ENCODE measurements at regions of chr14 and their contacts with region 1.

Region 1: DNA sequence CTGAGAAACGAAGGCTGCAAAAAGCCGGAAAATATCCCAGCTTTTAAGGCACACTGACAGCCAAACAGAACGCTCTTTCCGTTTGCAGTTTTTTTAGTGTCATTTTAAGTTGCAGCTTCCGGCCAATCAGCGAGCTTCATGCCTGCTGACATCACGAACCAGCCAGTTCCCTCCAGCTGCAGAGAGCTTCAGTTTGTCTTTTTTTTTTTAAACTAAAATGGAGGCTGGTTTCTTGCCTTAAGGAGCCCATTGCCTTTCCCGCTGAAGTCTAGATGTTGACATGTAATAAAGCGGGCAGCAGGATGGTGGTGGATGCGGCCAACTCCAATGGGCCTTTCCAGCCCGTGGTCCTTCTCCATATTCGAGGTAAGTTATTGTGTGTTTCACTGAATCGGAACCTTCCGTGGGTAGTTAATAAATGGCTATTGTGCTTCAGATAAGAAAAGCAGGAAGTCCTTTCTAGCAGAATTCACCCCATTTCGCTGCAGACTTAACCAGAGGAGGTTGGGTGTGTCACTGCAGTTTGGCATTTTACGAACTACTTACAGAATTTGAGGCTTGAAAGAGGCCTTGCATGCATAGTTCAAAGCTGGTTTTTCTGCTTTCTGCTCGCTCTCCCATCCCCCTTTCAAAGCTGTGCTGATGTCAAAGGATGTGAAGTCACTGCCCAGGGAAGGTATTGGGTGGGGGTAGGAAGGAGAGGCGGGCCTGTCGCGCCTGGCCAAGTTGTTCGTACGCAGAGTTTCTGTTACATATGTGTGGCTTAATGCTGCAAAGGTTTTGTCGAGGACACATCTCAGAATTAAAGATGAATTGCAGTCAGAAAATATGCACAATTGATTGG is 48.4 kb downstream of the PPP2R5C start:
- DNase-seq: peak; percentile 94
- ATAC-seq: peak; percentile 88
- H3K4me3 Mint-ChIP-seq: peak overlapping the region; percentile 87
- H3K27ac Mint-ChIP-seq: peak overlapping the region; percentile 95
- H3K4me1 Mint-ChIP-seq: peaks cover 40% of the 10 kb centered on the region
- H3K27me3 Mint-ChIP-seq: no peaks in the 10 kb centered on the region

Region 2: DNA sequence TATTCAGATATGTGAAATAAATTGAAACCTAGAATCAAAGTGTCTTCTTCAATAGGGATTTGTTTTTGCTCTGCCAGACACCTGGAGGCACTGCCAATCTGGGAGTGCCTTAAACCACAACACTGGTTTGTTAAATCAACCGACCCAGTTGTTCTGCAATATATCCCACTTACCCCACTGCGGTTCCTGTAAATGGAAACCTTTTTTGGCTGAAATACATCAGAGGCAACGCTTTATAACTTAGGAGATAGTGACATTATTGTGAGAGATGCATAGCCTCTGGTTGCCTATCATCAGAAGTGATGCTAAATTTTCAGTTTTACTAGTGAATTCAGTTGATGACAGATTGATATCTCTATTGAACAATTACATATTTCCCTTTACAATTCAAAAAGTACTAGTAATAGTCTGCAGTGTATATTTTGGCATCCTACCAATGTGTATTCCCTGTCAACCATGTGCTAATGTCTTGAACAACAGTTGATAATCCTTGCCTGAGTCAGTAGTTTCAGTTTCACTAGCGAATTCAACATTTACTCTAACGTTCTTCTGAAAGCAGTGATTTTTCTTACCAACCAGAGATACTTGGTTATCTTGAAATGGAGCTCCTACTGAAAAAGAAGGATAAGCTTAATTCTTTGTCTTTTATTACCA is 17.8 kb before region 1 on chr14:
- CTCF ChIA-PET with region 1: interaction called, 25 read pairs
- DNase-seq: no peak
- ATAC-seq: peak; percentile 94
- H3K4me3 Mint-ChIP-seq: peak overlapping the region; percentile 45
- H3K27ac Mint-ChIP-seq: peak overlapping the region; percentile 60
- H3K4me1 Mint-ChIP-seq: peaks cover 20% of the 10 kb centered on the region
- H3K27me3 Mint-ChIP-seq: no peaks in the 10 kb centered on the region

Region 3: GRCh38 chr14:101823511-101824120 is 13.7 kb after region 1 on chr14:
- CTCF ChIA-PET with region 1: interaction called, 76 read pairs
- DNase-seq: peak; percentile 85
- ATAC-seq: peak; percentile 57
- H3K4me3 Mint-ChIP-seq: peak overlapping the region; percentile 78
- H3K27ac Mint-ChIP-seq: peak overlapping the region; percentile 98
- H3K4me1 Mint-ChIP-seq: peaks cover 81% of the 10 kb centered on the region
- H3K27me3 Mint-ChIP-seq: no peaks in the 10 kb centered on the region